ENCODE measurements at regions of chr12 and their contacts with region 1.

Region 1: DNA sequence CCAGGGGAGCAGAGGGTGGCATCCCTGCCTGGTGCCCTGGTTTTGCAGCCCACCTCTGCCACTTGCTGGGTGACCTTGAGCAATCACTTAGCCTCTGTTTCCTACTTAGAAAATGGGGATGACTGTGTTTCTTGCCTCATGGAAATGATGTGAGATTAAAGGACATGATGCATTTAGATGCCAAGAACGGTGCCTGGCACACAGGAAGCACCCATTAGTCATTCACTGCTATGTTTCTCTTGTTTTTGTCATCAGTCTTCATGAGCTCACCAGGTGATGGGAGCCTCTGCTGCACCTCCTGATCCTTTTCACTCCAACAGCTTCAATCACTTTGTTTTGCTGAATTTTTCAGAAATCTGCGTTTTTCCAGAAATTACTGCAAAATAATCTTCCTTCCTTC is 23.6 kb upstream of the ATF1 start:
- DNase-seq: no peak
- H3K27ac ChIP-seq: 0 out of 2 replicates have a peak overlapping the region, but pooled peaks have one; percentile 8
- CTCF ChIP-seq: no peak

Region 2: GRCh38 chr12:50708631-50709030 is 31.7 kb before region 1 on chr12:
- CTCF ChIA-PET with region 1: no interaction called
- POLR2A ChIA-PET with region 1: no interaction called
- DNase-seq: no peak
- H3K27ac ChIP-seq: no peak overlapping the region
- CTCF ChIP-seq: no peak

Region 3: GRCh38 chr12:50763639-50764285 is 23.5 kb after region 1 on chr12 and contains the start of gene ATF1:
- CTCF ChIA-PET with region 1: no interaction called
- POLR2A ChIA-PET with region 1: interaction called, 12 read pairs
- DNase-seq: peak; percentile 93
- H3K27ac ChIP-seq: peak within 1 kb of the TSS; percentile 95
- CTCF ChIP-seq: no peak

Region 4: DNA sequence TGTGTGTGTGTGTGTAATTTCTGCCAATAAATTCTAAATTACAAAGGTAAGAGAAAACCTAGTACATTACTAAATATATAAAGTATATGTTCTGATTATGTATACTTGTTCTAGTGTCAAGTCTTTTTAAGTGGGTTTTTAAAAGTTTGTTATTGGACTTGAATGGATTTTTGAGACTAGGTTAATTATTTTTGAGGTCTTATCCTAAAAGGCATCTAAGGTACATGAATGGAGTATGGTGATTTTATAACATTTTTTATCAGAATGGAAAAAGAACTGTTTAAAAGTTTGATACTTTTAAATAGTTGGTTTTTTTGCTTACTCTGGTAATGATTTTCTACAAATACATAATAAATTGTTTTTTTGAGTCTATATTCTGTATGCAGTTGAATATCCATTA is 79.9 kb after region 1 on chr12:
- CTCF ChIA-PET with region 1: no interaction called
- POLR2A ChIA-PET with region 1: no interaction called
- DNase-seq: no peak
- H3K27ac ChIP-seq: no peak overlapping the region
- CTCF ChIP-seq: no peak

Measured in RWPE1 (cell line).